Posterior cingulate gyrus (tissue), 11 donors: ENCODE measurements at regions of chr1 and their contacts with region 1.

Region 1: GRCh38 chr1:38834937-38835827 is 24.4 kb downstream of the RRAGC start:
- DNase-seq: peak in 2 of 10 donors; percentile 15 to 28

Region 2: DNA sequence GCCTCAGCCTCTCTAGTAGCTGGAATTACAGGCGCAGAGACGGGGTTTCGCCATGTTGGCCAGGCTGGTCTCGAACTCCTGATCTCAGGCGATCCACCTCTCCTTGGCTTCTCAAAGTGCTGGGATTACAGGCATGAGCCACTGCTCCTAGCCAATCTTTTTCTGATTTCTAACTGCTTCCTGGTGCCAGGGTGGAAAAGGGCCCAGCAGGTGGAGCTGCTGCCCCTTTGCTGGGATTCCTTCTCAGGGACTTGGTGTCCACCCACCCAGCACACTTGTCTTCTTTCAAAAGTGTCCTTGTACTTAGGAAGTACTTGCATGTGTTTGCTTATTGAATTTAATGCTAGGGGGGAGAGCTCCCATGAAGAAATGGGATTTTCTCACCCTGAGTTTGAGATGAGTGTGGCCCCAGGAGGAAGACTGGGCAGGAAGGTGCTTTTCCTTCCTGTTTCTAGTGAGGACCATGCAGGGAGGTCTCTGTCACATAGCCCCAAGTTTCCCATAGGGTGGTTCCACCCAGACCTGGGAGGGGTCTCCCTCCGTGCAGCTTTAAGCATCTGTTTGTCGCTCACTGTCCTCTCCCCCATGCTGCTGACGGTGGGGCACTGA is 808.5 kb before region 1 on chr1:
- intact Hi-C with region 1: loop called (anchors 5 kb)
- DNase-seq: peak in 9 of 10 donors; percentile 56 to 95 (median 75)

Region 3: DNA sequence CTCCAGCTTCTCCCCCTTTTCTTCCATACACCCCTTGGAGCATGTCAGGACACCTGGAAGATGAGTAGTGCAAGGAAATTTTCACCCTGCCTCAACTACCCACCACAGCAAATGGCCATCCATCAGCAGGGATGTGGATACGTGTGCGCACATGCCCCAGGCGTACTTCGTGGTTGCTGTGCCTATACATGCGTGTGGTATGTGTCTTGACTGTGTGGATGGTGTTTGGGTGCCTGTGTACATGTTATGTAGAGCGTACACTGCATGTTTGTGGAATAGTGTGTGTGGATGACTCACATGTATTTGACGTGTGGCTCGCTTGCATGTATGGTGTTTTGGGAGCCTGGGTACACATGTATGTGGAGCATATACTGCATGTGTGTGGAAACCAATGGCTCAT is 134.1 kb before region 1 on chr1:
- intact Hi-C with region 1: no loop called
- DNase-seq: no peak